ENCODE measurements at regions of chr2 and their contacts with region 1.

Region 1: DNA sequence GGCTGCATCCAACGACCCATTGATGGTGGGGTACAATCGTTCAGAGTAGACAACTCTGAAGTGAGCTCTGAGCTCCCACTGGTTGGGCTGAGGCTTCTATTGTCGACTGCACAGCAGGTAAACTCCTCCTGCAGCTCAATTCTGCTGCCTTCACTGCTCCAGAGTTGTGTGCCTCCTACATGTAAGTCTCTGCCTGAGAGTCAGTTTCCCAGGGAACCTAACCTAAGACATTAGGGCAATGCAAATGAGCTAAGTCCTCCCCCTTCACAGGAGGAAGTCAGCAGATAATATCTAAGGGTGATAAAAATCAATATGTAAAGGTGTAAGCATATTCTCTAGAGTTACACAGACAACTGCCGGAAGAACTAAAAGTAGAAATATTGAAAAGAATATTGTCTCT is 22.5 kb upstream of the ACYP2 start:
- DNase-seq: peak; percentile 34 to 48 (median 44)
- H3K4me3 ChIP-seq: no peak overlapping the region
- H3K4me3 Mint-ChIP-seq: peak overlapping the region; percentile 10 to 80 (median 62)
- H3K27ac ChIP-seq: peak overlapping the region; percentile 51
- H3K27ac Mint-ChIP-seq: peak overlapping the region; percentile 64 to 96 (median 85)
- H3K4me1 ChIP-seq: peaks cover 31% of the 10 kb centered on the region
- H3K4me1 Mint-ChIP-seq: peaks cover 20 to 38% (median 30%) of the 10 kb centered on the region in 4 donors
- H3K27me3 ChIP-seq: no peaks in the 10 kb centered on the region
- H3K27me3 Mint-ChIP-seq: no peaks in the 10 kb centered on the region

Region 2: DNA sequence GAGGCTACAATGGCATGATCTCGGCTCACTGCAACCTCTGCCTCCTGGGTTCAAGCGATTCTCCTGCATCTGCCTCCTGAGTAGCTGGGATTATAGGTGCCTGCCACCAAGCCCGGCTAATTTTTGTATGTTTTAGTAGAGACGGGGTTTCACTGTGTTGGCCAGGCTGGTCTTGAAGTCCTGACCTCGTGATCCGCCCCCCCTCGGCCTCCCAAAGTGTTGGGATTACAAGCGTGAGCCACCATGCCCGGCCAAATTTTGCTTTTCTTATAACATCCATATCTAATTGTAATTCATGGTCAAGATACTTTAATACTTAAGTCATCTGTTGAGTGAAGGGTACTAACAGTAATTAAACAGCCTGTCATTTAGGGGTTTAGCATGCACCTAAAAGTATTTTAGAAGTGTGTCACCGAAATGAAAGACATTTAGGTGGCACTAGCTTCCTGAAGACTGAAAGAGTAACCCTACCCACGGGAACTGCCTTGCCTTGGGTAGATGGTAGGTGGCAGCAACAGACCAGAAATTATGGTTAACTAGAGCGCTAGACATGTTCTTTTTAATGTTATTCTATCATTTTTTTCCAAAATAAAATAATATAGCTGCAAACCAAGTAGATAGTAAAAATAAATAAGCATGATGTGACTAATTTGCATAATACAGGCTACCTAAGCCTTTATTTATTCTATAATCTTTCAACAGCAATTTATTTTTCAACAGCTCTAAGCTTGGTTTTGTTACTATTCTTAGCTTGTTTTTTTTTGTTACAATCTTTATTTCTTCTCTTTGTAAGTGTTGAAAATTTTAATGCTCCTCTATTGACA is 13.9 kb after region 1 on chr2:
- CTCF ChIA-PET with region 1: interaction called, 13 read pairs
- POLR2A ChIA-PET with region 1: interaction called, 6 read pairs
- intact Hi-C with region 1: no loop called
- DNase-seq: peak; percentile 39 to 56 (median 54)
- H3K4me3 ChIP-seq: no peak overlapping the region
- H3K4me3 Mint-ChIP-seq: no peak overlapping the region
- H3K27ac ChIP-seq: no peak overlapping the region
- H3K27ac Mint-ChIP-seq: peak overlapping the region in 1 of 7 donors; percentile 68
- H3K4me1 ChIP-seq: peaks cover 13% of the 10 kb centered on the region
- H3K4me1 Mint-ChIP-seq: peaks cover 8 to 12% (median 9%) of the 10 kb centered on the region in 4 donors
- H3K27me3 ChIP-seq: no peaks in the 10 kb centered on the region
- H3K27me3 Mint-ChIP-seq: no peaks in the 10 kb centered on the region